Gastrocnemius medialis (tissue), 4 donors: ENCODE measurements at regions of chr7 and their contacts with region 1.

Region 1: DNA sequence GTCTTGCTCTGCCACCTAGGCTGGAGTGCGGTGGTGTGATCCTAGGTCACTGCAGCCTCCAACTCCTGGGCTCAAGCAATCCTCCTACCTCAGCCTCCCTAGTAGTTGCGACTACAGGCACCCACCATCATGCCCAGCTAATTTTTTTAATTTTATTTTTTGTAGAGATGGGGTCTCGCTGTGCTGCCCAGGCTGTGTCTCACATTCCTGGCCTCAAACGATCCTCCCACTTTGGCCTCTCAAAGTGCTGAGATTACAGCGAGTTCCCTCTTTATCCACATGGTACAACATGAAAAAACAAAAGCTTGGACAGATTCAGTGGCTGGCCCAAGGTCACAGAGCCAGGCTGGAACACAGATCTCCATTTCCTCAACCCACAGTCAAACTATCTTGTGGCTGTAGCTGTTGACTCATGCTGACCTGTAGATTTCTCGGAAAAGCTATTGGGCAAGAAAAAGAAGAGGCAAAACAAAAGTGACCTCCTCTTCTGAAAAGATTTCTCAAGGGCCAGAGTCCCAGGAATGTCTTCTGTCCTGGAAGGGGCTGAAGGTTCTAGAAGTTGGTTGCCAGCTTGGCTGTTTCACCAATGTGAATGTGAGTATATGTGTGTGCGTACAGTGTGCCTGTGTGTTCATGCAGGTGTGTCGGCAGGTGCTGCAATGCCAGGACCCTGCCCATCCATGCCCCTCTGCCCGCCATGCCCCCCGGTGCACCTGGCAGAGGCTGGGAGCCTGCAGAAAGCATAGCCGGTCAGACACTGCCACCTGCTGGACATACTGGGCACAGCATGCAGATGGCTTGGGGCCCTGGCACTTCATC is 28.4 kb downstream of the TMEM130 start:
- DNase-seq: peak; percentile 24 to 37
- ATAC-seq: peak; percentile 45 to 78
- H3K4me3 ChIP-seq: no peak overlapping the region
- H3K27ac ChIP-seq: no peak overlapping the region
- H3K4me1 ChIP-seq: no peaks in the 10 kb centered on the region
- H3K27me3 ChIP-seq: peaks cover 0 to 3% (median 0%) of the 10 kb centered on the region in 3 donors
- CTCF ChIP-seq: peak; percentile 87 to 97 (median 94)
- POLR2A ChIP-seq: no peak

Region 2: DNA sequence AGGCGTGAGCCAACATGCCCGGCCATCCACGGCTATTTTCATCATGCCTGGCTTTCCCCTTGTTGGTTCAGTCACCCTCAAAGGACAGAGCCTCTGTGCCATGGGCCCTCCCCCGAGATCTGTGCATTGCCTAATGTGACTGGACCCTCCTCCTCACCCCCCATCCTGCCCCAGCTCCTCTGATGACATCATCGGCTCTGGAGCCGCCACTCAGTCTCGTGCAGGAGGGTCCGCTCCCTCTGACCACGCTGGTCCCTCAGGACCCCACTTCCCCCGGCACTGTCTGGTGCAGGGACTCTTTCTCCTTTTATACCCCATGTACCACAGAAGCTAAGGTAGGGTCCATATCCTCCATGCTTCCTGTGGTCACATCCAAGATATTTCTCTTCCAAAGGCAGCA is 407.3 kb before region 1 on chr7:
- in situ Hi-C with region 1: loop called (anchors 5 kb)
- intact Hi-C with region 1: loop called (anchors 1 kb)
- DNase-seq: no peak
- ATAC-seq: no peak
- H3K4me3 ChIP-seq: no peak overlapping the region
- H3K27ac ChIP-seq: no peak overlapping the region
- H3K4me1 ChIP-seq: no peaks in the 10 kb centered on the region
- H3K27me3 ChIP-seq: no peaks in the 10 kb centered on the region
- CTCF ChIP-seq: no peak
- POLR2A ChIP-seq: no peak

Region 3: GRCh38 chr7:98629001-98629431 is 212.4 kb before region 1 on chr7:
- in situ Hi-C with region 1: no loop called
- intact Hi-C with region 1: no loop called
- DNase-seq: no peak
- ATAC-seq: no peak
- H3K4me3 ChIP-seq: no peak overlapping the region
- H3K27ac ChIP-seq: no peak overlapping the region
- H3K4me1 ChIP-seq: no peaks in the 10 kb centered on the region
- H3K27me3 ChIP-seq: peaks cover 0 to 5% (median 0%) of the 10 kb centered on the region in 3 donors
- CTCF ChIP-seq: no peak
- POLR2A ChIP-seq: no peak

Region 4: DNA sequence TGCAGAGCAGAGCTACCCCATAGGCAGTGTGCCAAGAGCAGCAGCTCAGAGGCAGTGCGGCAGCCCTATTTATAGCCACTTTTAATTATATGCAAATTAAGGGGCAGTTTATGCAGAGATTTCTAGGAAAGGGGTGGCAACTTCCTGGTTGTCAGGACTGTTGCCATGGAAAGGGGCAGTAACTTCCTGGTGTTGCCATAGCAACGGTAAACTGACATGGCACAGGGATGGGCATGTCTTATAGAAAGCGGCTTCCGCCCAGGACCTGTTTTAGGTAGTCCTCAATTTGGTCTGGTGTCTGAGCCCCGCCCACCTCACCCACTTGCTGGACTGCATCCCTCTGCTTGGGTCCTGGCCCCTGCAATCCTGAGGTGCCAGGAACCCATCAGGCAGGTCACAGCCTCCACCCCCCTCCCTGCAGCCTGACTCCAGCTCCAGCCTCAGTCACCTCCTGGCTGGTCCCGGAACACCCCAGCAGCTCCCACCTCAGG is 87.4 kb before region 1 on chr7:
- in situ Hi-C with region 1: no loop called
- intact Hi-C with region 1: loop called (anchors 10 kb)
- DNase-seq: no peak
- ATAC-seq: no peak
- H3K4me3 ChIP-seq: no peak overlapping the region
- H3K27ac ChIP-seq: no peak overlapping the region
- H3K4me1 ChIP-seq: no peaks in the 10 kb centered on the region
- H3K27me3 ChIP-seq: no peaks in the 10 kb centered on the region
- CTCF ChIP-seq: no peak
- POLR2A ChIP-seq: no peak